Cardiac septum (tissue), 1 donor: ENCODE measurements at regions of chr19 and their contacts with region 1.

Region 1: GRCh38 chr19:44113138-44113783 is at the start of gene ZNF225:
- DNase-seq: peak; percentile 97
- total RNA-seq, gene ZNF225: 3.3 TPM

Region 2: DNA sequence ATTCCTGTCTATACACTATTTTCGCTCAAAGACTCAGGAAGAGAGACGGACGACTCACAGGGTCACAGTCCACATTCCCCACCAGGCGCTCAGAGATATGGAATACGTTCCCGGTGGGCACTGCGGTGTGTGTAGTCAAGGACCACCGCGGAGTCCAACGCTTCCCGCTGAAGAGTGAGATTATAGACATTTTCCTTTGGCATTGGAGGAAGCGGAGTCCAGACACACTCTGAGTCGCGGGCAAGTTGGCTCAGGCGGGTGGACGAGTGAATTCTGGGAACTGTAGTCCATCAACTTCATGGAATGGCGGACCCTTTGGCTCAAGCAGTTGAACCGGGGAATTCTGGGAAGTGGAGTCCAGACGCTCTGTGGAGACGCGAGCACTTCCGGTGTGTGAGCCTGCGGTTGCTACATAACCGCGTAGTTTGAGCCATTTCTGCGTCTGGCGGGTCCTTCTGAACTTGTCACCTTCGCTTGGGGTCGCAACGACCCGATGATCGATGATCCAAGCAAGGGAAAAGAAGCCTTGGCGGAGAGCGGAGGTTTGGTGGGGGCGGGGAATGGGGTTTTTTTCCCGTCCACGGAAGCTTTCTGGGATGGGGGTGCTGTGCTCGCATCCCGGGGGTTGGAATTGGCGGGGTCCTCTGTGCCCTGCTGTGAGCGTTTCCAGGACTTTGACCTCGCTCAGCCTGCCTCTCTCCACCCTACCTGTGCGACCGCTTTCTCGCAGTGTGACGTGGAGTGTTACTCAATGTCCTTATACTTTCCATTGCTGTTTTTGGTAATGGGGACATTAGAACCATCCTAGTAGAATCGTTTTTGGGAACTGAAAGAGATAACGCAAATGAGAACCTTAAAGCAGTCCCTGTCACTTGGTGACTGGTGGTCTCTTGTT is 110.4 kb before region 1 on chr19 and contains the start of gene ZNF230:
- intact Hi-C with region 1: loop called (anchors 5 kb)
- DNase-seq: peak; percentile 95
- total RNA-seq, gene ZNF230: 2.3 TPM

Region 3: DNA sequence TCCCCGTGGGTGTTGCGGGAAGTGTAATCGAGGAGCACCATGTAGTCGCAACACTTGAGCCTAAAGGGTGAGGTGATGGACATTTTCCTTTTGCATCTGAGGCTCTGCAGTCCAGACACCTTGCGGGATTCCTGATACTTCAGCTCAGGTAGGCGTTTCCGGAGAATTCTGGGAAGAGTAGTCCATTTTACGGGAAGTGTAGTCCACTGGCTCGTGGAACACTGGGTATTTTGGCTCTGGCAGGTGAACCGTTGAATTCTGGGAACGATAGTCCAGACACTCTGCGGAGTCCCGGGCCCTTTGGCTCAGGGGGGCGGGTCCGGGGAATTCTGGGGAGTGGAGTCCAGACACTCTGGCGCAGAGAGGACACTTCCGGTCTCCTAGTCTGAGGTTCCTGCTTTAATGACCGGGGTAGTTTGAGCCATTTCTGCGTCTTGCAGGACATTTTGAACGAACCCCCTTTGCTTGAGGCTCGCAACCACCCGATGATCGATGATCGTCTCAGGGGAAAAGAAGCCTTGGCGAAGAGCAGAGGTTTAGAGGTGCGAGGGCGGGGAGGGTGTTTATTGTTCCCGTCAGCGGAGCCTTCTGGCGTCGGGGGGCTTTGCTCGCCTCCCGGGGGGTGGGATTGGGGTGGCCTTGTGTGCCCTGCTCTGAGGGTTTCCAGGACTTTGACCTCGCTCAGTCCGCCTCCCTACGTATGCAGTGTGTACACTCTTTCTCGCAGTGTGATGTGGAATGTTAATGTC is 61.4 kb before region 1 on chr19 and contains the start of gene ZNF223:
- intact Hi-C with region 1: loop called (anchors 1 kb)
- DNase-seq: peak; percentile 97
- total RNA-seq, gene ZNF223: 2.2 TPM

Region 4: DNA sequence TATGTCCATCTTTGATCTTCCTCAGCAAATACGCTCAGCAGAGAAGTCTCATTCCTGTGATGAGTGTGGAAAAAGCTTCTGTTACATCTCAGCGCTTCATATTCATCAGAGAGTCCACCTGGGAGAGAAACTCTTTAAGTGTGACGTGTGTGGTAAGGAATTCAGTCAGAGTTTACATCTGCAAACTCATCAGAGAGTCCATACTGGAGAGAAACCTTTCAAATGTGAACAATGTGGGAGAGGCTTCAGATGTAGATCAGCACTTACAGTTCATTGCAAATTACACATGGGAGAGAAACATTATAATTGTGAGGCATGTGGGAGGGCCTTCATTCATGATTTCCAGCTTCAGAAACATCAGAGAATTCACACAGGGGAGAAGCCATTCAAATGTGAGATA is 47.0 kb before region 1 on chr19:
- intact Hi-C with region 1: no loop called
- DNase-seq: no peak

Region 5: DNA sequence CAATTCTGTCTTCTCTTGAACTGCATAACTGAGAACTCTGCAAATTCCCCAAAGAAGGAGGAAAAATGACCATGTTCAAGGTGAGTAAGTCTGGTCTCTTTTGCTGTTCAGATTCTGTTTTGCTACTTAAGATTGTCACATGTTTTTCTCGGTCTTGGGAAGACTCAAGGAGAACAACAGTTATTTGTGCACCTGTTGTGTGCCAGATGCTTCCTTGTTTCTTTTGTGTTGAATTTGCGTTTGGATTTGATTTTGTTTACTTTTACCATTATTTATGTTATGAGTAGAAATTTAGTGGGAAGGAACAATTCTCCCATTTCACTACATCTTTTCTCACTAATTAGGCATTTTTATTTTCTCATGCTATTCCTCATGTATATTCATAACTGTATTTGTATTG is 36.9 kb before region 1 on chr19:
- intact Hi-C with region 1: no loop called
- DNase-seq: no peak

Region 6: DNA sequence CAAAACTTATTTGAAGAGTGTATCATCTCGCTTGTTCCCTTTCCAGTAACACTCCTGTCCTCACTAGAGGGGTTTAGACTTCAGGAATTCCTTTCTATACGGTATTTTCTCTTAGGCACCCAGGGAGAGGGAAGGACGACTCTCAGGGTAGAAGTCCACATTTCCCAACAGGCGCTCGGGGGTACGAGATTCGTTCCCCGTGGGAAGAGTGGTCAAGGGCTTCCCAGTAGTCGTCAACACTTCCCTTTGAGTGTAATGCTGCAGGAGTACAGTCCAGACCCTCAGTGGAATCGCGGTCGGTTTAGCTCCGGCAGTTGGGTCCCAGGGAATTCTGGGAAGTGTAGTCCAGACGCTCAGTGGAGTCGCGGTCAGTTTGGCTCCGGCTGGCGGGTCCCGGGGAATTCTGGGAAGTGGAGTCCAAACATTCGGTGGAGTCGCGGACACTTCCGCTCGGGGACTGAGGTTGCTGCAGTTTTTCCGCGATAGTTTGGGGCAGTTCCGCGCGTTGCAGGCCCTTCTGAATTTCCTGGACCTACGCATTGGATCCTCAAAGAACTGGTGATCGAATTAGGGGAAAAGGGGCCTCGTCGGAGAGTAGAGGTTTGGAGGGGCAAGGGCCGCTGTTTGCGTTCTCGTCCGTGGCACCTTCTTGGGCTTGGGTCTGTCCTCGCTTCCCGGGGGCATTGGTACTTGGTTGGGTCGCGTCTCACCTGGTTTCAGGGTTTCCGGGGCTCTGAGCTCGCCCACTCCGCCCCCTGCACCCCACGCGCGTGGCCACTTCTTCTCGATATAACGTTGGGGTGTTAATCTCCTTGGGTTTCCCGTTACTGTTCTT is 19.1 kb before region 1 on chr19 and contains the start of gene ZNF224:
- intact Hi-C with region 1: loop called (anchors 1 kb)
- DNase-seq: peak; percentile 97
- total RNA-seq, gene ZNF224: 12.9 TPM

Region 7: GRCh38 chr19:44141191-44142058 is 28.2 kb after region 1 on chr19 and contains the start of gene ZNF234:
- intact Hi-C with region 1: loop called (anchors 2 kb)
- DNase-seq: peak; percentile 94
- total RNA-seq, gene ZNF234: 9.6 TPM

Region 8: GRCh38 chr19:44164673-44165512 is 51.6 kb after region 1 on chr19 and contains the start of gene ZNF226:
- intact Hi-C with region 1: loop called (anchors 1 kb)
- DNase-seq: peak; percentile 95
- total RNA-seq, gene ZNF226: 25.6 TPM

Region 9: GRCh38 chr19:44212250-44212865 is 99.1 kb after region 1 on chr19 and contains the start of gene ZNF227:
- intact Hi-C with region 1: loop called (anchors 5 kb)
- DNase-seq: peak; percentile 95
- total RNA-seq, gene ZNF227: 15.4 TPM